HAP-1 (cell line): ENCODE measurements at regions of chr6 and their contacts with region 1.

Region 1: GRCh38 chr6:43769526-43770416 is at the start of gene VEGFA:
- DNase-seq: peak; percentile 70 to 94
- H3K4me3 ChIP-seq: peak within 1 kb of the TSS; percentile 95
- H3K4me1 ChIP-seq: peaks cover 24% of the 10 kb centered on the region
- H3K27me3 ChIP-seq: no peaks in the 10 kb centered on the region

Region 2: GRCh38 chr6:43980004-43980795 is 210.4 kb after region 1 on chr6:
- in situ Hi-C with region 1: no loop called
- DNase-seq: no peak
- H3K4me3 ChIP-seq: no peak overlapping the region
- H3K4me1 ChIP-seq: no peaks in the 10 kb centered on the region
- H3K27me3 ChIP-seq: no peaks in the 10 kb centered on the region; the same call in 1 of the 2 replicates

Region 3: DNA sequence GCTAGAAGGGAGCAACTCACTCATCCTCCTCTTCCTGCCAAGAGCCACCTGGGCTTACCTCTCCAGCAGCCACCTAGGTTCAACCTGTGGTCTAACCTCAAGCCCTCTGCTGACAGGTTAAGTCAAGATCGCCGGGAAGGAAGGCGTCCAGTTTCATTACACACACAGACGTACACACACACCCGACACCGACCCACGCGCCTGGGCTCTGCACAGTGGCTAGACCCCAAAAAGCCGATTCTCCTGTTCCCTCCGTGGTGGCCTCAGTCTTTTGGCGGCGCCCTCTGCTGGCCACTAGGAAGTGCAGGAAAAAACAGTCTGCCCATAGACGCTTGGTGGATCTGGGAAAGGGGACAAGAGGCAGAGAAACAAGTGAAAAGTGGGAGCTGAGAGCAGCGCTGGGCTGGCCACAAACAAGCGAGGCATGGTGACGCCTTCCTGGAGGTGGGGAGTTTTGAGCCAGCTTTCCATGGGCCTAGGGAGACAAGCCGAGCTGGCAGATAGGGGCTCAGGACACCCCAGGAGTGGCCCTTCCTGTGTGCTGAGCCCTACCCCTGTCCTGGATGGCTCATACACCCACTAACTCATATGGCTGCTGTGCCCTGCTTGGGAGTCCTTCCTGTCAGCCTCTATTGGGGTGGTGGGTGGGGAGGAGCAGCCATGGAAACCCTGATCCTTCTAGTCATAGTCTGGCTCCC is 304.8 kb after region 1 on chr6:
- in situ Hi-C with region 1: loop called (anchors 5 kb)
- DNase-seq: peak; percentile 63 to 81
- H3K4me3 ChIP-seq: no peak overlapping the region
- H3K4me1 ChIP-seq: peaks cover 14% of the 10 kb centered on the region
- H3K27me3 ChIP-seq: no peaks in the 10 kb centered on the region

Region 4: GRCh38 chr6:44246663-44247337 is 477.0 kb after region 1 on chr6 and contains the start of gene HSP90AB1:
- in situ Hi-C with region 1: loop called (anchors 10 kb)
- DNase-seq: peak; percentile 97
- H3K4me3 ChIP-seq: peak within 1 kb of the TSS; percentile 90
- H3K4me1 ChIP-seq: peaks cover 18% of the 10 kb centered on the region
- H3K27me3 ChIP-seq: no peaks in the 10 kb centered on the region